ENCODE measurements at regions of chr9 and their contacts with region 1.

Region 1: GRCh38 chr9:131739980-131740648 is at the start of gene RAPGEF1:
- DNase-seq: peak; percentile 88
- CTCF ChIP-seq: peak; percentile 100

Region 2: DNA sequence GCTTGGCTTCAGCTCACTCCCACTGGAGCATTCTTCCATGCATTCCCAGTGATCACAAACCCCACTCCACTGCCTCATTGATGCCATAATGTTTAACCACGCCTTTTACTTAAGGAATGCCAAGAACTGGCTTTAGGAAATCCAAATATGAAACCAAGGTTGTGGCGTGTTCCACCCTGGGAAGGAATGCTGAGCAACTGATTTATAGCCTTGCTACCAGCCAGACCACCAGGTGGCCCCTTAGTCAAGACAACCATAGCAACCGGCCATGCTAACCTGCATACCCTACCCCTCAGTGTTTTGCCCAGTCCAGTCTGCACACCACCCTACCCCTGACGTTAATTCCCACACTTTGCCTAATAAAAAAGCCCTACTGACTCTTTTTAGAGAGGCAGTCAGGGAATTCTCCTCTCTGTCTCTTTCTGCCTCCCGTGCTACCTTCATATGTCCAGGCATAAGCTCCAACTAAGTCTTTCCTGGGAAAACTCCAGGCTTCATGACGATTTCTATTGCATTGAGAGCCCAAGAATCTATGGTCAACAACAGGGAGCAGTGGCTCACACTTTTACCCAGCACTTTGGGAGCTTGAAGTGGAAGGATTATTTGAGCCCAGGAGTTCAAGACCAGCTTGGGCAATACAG is 373.2 kb before region 1 on chr9:
- in situ Hi-C with region 1: loop called (anchors 10 kb)
- DNase-seq: no peak
- CTCF ChIP-seq: peak; percentile 32

Region 3: GRCh38 chr9:131590908-131591844 is 148.9 kb before region 1 on chr9:
- in situ Hi-C with region 1: loop called (anchors 5 kb)
- DNase-seq: peak; percentile 88
- CTCF ChIP-seq: peak; percentile 72

Region 4: DNA sequence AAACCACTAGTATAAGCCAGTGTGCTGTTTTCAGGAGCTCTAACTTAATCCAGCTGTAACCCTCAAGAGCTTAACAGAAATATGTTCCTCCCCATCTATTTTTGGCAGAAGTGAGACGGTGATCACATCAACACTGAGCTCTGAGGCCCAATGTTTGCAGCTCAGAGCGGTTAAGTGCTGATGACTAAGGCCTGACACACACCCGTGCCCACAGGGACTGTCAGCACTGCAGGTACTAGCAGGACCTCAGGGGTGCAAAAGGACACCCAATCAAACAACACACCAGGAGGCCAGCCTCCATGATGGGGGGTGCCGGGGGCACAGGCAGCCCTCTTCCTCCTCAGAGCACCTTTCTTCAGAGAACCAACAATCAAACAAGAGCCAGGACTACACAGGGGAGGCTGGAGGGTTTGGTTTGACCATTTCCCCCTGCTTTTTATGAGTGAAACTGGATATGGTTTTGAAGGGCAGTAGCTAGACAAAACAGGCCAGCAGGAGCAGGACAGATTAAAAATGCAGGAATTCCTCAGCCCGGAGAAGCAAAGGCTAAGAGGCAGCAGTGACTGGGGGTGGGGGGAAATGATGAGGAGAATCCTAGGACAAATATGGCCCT is 61.5 kb before region 1 on chr9:
- in situ Hi-C with region 1: loop called (anchors 10 kb)
- DNase-seq: peak; percentile 87
- CTCF ChIP-seq: no peak

Region 5: GRCh38 chr9:132857616-132858342 is 1117.7 kb after region 1 on chr9:
- in situ Hi-C with region 1: no loop called
- DNase-seq: no peak
- CTCF ChIP-seq: no peak

Region 6: GRCh38 chr9:133252301-133252780 is 1512.2 kb after region 1 on chr9:
- in situ Hi-C with region 1: no loop called
- DNase-seq: peak; percentile 24
- CTCF ChIP-seq: no peak